ENCODE measurements at regions of chr6 and their contacts with region 1.

Region 1: GRCh38 chr6:111515259-111515658 is 32.2 kb upstream of the REV3L start:
- DNase-seq: no peak
- ATAC-seq: no peak
- H3K4me3 ChIP-seq: no peak overlapping the region
- H3K4me3 Mint-ChIP-seq: no peak overlapping the region
- H3K27ac ChIP-seq: no peak overlapping the region
- H3K27ac Mint-ChIP-seq: no peak overlapping the region
- H3K4me1 ChIP-seq: no peaks in the 10 kb centered on the region
- H3K4me1 Mint-ChIP-seq: no peaks in the 10 kb centered on the region
- H3K27me3 ChIP-seq: no peaks in the 10 kb centered on the region
- H3K27me3 Mint-ChIP-seq: no peaks in the 10 kb centered on the region
- CTCF ChIP-seq: no peak

Region 2: DNA sequence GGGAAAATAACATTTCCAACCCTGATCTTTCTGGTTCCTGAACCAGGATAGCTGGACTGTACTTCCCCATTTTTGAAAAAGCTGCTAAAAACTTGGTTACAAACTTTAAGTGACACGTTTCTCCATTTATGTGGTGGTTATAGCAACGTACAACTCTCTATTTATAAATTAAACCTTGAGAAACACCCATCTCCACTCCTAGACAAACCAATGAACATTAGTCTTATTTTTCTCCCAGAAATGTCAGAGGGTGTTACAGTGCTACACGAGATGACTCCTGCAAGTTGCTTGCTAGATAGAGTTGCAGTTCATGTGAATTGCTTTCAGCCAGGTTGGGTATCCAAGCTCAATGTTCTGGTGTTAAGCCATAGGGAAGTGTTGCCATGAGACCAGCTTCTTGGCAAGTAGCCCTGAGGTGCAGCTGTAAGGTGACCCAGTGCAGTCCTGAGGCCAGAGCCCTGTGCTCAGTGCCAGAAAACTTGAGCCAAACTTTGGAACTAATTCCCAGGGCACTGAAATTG is 19.0 kb after region 1 on chr6:
- CTCF ChIA-PET with region 1: no interaction called
- POLR2A ChIA-PET with region 1: no interaction called
- intact Hi-C with region 1: no loop called
- DNase-seq: no peak
- ATAC-seq: no peak
- H3K4me3 ChIP-seq: no peak overlapping the region
- H3K4me3 Mint-ChIP-seq: no peak overlapping the region
- H3K27ac ChIP-seq: no peak overlapping the region
- H3K27ac Mint-ChIP-seq: no peak overlapping the region
- H3K4me1 ChIP-seq: peaks cover 5% of the 10 kb centered on the region
- H3K4me1 Mint-ChIP-seq: peaks cover 37% of the 10 kb centered on the region
- H3K27me3 ChIP-seq: no peaks in the 10 kb centered on the region
- H3K27me3 Mint-ChIP-seq: no peaks in the 10 kb centered on the region
- CTCF ChIP-seq: no peak

Region 3: DNA sequence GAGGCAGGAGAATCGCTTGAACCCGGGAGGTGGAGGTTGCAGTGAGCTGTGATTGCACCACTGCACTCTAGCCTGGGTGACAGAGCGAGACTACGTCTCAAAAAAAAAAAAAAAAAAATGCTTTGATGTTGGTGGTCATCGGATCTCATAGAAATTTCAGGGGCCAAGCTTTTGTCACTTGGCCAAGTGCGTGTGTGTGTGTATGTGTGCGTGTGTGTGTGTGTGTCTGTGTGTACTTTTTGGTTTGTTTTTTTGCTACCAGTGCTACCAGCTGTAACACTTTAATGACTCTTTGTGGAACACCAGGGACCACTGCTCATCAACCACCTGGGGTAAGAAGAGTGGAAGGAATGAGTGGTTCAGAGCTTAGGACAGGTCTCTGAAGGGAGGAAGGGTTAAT is 40.7 kb after region 1 on chr6:
- CTCF ChIA-PET with region 1: no interaction called
- POLR2A ChIA-PET with region 1: no interaction called
- intact Hi-C with region 1: loop called in 1 of 2 experiments (anchors 1 kb)
- DNase-seq: no peak
- ATAC-seq: no peak
- H3K4me3 ChIP-seq: no peak overlapping the region
- H3K4me3 Mint-ChIP-seq: no peak overlapping the region
- H3K27ac ChIP-seq: no peak overlapping the region
- H3K27ac Mint-ChIP-seq: no peak overlapping the region
- H3K4me1 ChIP-seq: peaks cover 13% of the 10 kb centered on the region
- H3K4me1 Mint-ChIP-seq: peaks cover 17% of the 10 kb centered on the region
- H3K27me3 ChIP-seq: no peaks in the 10 kb centered on the region
- H3K27me3 Mint-ChIP-seq: no peaks in the 10 kb centered on the region
- CTCF ChIP-seq: no peak